Gastrocnemius medialis (tissue), 4 donors: ENCODE measurements at regions of chr2 and their contacts with region 1.

Region 1: DNA sequence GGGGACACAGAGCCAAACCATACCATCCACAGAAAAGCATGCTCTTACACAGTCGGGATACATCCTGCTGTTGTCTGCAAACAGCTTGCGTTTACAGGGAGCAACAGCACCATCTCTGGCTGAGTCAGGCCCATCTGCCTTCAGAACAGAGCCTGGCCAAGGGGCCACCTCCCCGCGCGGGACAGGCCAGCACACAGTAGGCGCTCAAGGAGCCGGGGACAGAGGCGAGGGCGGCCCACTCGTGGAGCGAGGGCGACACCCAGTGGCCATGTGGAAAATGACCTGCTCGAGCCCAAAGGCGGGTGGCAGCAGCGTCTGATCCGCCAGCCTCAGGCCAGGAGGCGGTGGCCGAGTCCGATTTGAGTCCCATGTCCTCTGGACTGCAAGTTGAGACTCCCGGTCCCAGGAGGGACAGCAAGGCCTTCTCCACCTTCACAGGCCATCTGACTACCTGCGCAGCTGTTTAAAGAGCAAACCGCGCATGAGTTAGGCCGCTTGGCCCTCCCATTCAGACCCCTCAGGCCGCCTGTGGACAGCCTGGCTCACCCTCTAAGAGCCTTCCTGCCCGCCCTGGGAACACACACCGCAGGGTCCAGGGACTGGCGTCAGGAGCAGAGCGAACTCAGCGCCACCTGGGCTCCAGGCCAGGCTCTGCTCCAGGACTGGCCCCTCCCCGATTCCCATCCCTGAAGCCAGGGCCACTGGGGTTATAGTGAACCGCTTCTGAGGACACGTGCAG is 38.3 kb downstream of the TTC32 start:
- DNase-seq: peak; percentile 40 to 55
- ATAC-seq: peak; percentile 62 to 85
- H3K4me3 ChIP-seq: peak overlapping the region in 1 of 4 donors; percentile 35
- H3K27ac ChIP-seq: no peak overlapping the region
- H3K4me1 ChIP-seq: no peaks in the 10 kb centered on the region
- H3K27me3 ChIP-seq: peaks cover 0 to 4% (median under 1%) of the 10 kb centered on the region in 3 donors
- CTCF ChIP-seq: peak; percentile 94 to 99 (median 97)
- POLR2A ChIP-seq: no peak

Region 2: GRCh38 chr2:18387441-18388206 is 1475.8 kb before region 1 on chr2:
- in situ Hi-C with region 1: loop called in 3 of 4 experiments (anchors 25 kb)
- intact Hi-C with region 1: loop called (anchors 5 kb)
- DNase-seq: peak; percentile 44 to 61
- ATAC-seq: peak; percentile 93 to 94
- H3K4me3 ChIP-seq: no peak overlapping the region
- H3K27ac ChIP-seq: no peak overlapping the region
- H3K4me1 ChIP-seq: no peaks in the 10 kb centered on the region
- H3K27me3 ChIP-seq: no peaks in the 10 kb centered on the region
- CTCF ChIP-seq: peak; percentile 72 to 94 (median 87)
- POLR2A ChIP-seq: no peak

Region 3: GRCh38 chr2:18749912-18750526 is 1113.5 kb before region 1 on chr2:
- in situ Hi-C with region 1: loop called (anchors 10 to 25 kb)
- intact Hi-C with region 1: loop called (anchors 1 kb)
- DNase-seq: no peak
- ATAC-seq: peak; percentile 41 to 69
- H3K4me3 ChIP-seq: no peak overlapping the region
- H3K27ac ChIP-seq: peak overlapping the region in 3 of 4 donors; percentile 17 to 47 (median 28)
- H3K4me1 ChIP-seq: peaks cover 26 to 34% of the 10 kb centered on the region in 2 donors
- H3K27me3 ChIP-seq: no peaks in the 10 kb centered on the region
- CTCF ChIP-seq: peak; percentile 60 to 78 (median 73)
- POLR2A ChIP-seq: no peak

Region 4: DNA sequence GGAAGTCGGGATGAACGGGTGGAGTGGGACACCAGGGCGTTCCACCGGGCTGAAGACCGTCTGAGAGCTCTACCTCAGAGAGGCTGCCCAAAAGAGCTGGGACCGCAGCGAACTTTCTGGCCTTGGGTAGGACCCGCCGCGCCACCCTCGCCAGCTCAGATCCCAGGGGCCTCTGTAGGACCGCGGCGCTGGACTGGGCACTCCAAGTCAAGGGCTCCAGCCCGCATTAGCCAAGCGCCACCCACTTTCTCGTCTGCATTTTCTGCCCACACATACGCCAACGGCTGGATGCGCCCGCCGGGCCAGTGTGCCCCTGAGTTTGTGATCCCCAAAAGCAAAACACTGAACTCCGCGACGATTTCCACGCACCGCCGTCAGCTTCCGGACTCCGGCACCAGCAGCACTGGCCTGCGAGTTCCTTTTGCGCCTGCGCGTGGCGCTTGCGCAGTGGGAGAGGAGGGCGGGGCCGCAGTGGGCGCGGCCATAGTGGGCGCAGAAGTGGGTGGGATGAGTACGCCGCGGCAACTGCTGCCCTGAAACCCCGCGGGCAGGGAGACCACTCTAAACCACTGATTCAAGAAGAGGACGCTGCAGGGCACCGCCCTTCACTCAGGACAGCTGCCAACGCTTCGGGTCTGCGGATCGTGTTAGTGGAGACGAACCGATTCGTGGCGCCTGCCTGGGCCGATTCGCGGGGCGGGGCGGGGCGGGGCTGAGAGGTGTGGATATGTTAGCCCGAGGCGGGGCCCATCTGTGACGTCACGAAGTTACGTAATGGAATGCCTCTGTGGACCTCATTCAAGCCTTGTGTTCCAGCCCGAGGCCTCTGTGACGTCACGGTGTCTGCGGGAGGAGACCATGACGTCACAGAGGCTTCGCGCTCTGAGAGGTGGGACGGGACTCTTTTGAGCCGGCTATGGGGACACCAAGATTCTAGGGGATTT is 515.6 kb before region 1 on chr2:
- in situ Hi-C with region 1: loop called in 2 of 4 experiments (anchors 10 kb)
- intact Hi-C with region 1: loop called (anchors 2 kb)
- DNase-seq: peak; percentile 85 to 93
- ATAC-seq: peak; percentile 96 to 97
- H3K4me3 ChIP-seq: peak overlapping the region; percentile 89 to 97 (median 94)
- H3K27ac ChIP-seq: peak overlapping the region; percentile 91 to 97 (median 95)
- H3K4me1 ChIP-seq: peaks cover 11 to 13% of the 10 kb centered on the region in 2 donors
- H3K27me3 ChIP-seq: peaks cover 0 to 3% (median 0%) of the 10 kb centered on the region in 3 donors
- CTCF ChIP-seq: peak in 1 of 5 experiments; percentile 10
- POLR2A ChIP-seq: peak; percentile 90 to 91

Region 5: GRCh38 chr2:19682493-19682892 is 181.0 kb before region 1 on chr2:
- in situ Hi-C with region 1: no loop called
- intact Hi-C with region 1: loop called (anchors 10 kb)
- DNase-seq: no peak
- ATAC-seq: no peak
- H3K4me3 ChIP-seq: no peak overlapping the region
- H3K27ac ChIP-seq: no peak overlapping the region
- H3K4me1 ChIP-seq: peaks cover 13 to 15% of the 10 kb centered on the region in 2 donors
- H3K27me3 ChIP-seq: no peaks in the 10 kb centered on the region
- CTCF ChIP-seq: no peak
- POLR2A ChIP-seq: no peak

Region 6: DNA sequence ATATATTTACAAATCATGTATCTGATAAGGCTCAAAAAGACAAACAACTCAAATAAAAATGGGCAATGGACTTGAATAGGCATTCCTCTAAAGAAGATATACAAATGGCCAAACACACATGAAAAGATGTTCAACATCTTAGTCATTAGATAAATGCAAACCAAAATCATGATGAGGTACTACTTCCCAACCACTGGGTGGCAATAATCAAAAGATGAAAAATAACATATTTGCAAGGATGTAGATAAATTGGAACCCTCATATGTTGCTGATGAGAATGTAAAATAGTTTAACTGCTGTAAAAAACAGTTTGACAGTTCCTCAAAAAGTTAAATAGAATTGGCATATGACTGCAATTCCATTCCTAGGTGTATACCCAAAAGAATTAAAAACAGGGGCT is 94.0 kb before region 1 on chr2:
- in situ Hi-C with region 1: no loop called
- intact Hi-C with region 1: loop called (anchors 5 kb)
- DNase-seq: no peak
- ATAC-seq: no peak
- H3K4me3 ChIP-seq: no peak overlapping the region
- H3K27ac ChIP-seq: no peak overlapping the region
- H3K4me1 ChIP-seq: no peaks in the 10 kb centered on the region
- H3K27me3 ChIP-seq: no peaks in the 10 kb centered on the region
- CTCF ChIP-seq: no peak
- POLR2A ChIP-seq: no peak